ENCODE measurements at regions of chr22 and their contacts with region 1.

Region 1: GRCh38 chr22:43385770-43386641 is 25.8 kb upstream of the MPPED1 start:
- H3K4me3 ChIP-seq: no peak overlapping the region
- H3K27ac ChIP-seq: no peak overlapping the region
- H3K4me1 ChIP-seq: no peaks in the 10 kb centered on the region
- CTCF ChIP-seq: peak; percentile 89

Region 2: GRCh38 chr22:43187171-43188099 is 198.6 kb before region 1 on chr22:
- CTCF ChIA-PET with region 1: no interaction called
- POLR2A ChIA-PET with region 1: no interaction called
- H3K4me3 ChIP-seq: peak overlapping the region; percentile 37
- H3K27ac ChIP-seq: peak overlapping the region; percentile 90
- H3K4me1 ChIP-seq: no peaks in the 10 kb centered on the region
- CTCF ChIP-seq: peak; percentile 87

Region 3: GRCh38 chr22:43404673-43405385 is 18.8 kb after region 1 on chr22:
- CTCF ChIA-PET with region 1: interaction called, 11 read pairs
- POLR2A ChIA-PET with region 1: no interaction called
- H3K4me3 ChIP-seq: no peak overlapping the region
- H3K27ac ChIP-seq: no peak overlapping the region
- H3K4me1 ChIP-seq: no peaks in the 10 kb centered on the region
- CTCF ChIP-seq: no peak

Region 4: GRCh38 chr22:43743131-43743530 is 357.1 kb after region 1 on chr22:
- CTCF ChIA-PET with region 1: interaction called, 13 read pairs
- POLR2A ChIA-PET with region 1: no interaction called
- H3K4me3 ChIP-seq: no peak overlapping the region
- H3K27ac ChIP-seq: no peak overlapping the region
- H3K4me1 ChIP-seq: no peaks in the 10 kb centered on the region
- CTCF ChIP-seq: 0 out of 2 replicates have a peak, but pooled peaks have one; percentile 24

Measured in HEK293 (cell line).